ENCODE measurements at regions of chr18 and their contacts with region 1.

Region 1: GRCh38 chr18:8548186-8548585 is 61.1 kb upstream of the RAB12 start:
- DNase-seq: no peak
- ATAC-seq: no peak
- H3K4me3 ChIP-seq: no peak overlapping the region
- H3K27ac ChIP-seq: no peak overlapping the region
- H3K4me1 ChIP-seq: no peaks in the 10 kb centered on the region
- H3K27me3 ChIP-seq: no peaks in the 10 kb centered on the region

Region 2: GRCh38 chr18:7545734-7546133 is 1002.5 kb before region 1 on chr18:
- intact Hi-C with region 1: no loop called
- DNase-seq: peak in 2 of 3 donors; percentile 23 to 59
- ATAC-seq: no peak
- H3K4me3 ChIP-seq: no peak overlapping the region
- H3K27ac ChIP-seq: no peak overlapping the region
- H3K4me1 ChIP-seq: no peaks in the 10 kb centered on the region
- H3K27me3 ChIP-seq: no peaks in the 10 kb centered on the region

Region 3: GRCh38 chr18:8478166-8478967 is 69.8 kb before region 1 on chr18:
- intact Hi-C with region 1: loop called in 1 of 4 experiments (anchors 10 kb)
- DNase-seq: peak; percentile 56 to 80 (median 80)
- ATAC-seq: peak; percentile 50 to 69
- H3K4me3 ChIP-seq: no peak overlapping the region
- H3K27ac ChIP-seq: no peak overlapping the region
- H3K4me1 ChIP-seq: no peaks in the 10 kb centered on the region
- H3K27me3 ChIP-seq: no peaks in the 10 kb centered on the region